ENCODE measurements at regions of chr1 and their contacts with region 1.

Region 1: DNA sequence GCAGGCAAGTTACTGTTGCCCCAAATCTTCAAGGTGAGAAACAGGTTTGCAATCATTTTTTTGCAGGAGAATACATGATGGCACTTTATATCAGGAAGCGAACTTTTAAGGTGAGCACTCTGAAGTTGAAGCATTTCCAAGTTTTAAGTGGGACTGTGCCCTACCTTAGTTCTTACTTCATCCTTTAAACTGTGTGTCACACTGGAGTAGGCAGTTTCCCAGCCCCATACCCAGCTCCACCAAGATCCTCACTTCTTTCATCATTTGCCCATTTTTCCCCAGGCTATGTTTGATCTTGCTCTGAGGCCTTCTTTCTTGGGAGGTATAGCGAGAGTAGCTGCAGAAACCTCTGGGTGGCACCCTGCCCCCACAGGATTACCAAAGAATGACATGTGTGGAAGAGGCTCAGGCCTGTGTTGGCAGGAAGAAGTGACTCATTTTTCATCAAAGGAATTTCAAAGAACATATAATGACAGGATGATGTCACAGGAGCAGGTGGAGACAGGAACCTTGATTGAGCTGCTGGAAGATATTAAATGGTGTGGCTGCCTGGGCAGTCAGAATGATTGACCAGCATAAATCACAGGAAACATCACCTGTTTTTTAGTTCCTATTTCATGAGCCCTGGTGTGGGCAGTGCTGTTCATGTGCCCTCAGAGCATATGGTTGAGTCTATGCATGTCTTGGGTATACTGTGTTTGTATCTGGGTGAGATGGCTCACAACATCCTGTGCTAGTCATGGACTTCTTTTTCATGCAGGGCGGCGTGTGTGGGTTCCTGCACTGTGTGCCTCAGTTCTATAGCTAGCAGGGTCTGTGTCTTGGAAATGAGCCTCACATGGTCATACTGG is 20.8 kb upstream of the MACF1 start:
- DNase-seq: peak; percentile 89
- H3K4me3 Mint-ChIP-seq: peak overlapping the region; percentile 51
- H3K27ac Mint-ChIP-seq: peak overlapping the region; percentile 91
- H3K4me1 Mint-ChIP-seq: peaks cover 80% of the 10 kb centered on the region
- H3K27me3 Mint-ChIP-seq: no peaks in the 10 kb centered on the region
- CTCF ChIP-seq: peak; percentile 48

Region 2: DNA sequence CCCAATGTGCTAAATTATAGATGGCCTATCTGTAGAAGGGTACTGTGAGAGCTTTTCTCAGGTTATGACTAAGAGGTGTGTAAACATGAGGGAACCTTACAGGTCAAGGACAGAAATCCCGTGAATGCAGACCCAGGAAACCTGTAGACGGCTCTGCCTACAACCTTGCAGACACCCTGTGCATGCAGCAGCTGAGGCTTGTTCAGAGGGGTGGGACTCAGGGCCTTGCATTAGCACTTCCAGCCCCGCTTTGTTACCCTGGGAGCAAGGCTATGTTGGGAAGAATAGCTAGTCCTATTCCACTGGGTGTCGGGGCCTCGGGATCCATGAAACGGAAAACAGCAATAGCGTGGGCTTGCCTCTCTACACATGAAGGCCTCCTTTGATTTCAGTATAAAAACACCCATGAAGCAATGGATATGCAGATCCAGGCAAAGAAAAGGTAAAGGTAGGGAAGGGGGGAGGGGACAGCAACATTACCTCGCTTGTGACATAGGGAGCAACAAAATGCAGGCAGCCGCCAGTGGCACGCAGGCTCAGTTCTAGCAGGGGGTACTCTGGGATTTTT is 167.0 kb before region 1 on chr1:
- CTCF ChIA-PET with region 1: no interaction called
- intact Hi-C with region 1: no loop called
- DNase-seq: peak; percentile 10
- H3K4me3 Mint-ChIP-seq: no peak overlapping the region
- H3K27ac Mint-ChIP-seq: no peak overlapping the region
- H3K4me1 Mint-ChIP-seq: peaks cover 11% of the 10 kb centered on the region
- H3K27me3 Mint-ChIP-seq: no peaks in the 10 kb centered on the region
- CTCF ChIP-seq: no peak

Region 3: GRCh38 chr1:39115271-39116110 is 68.2 kb before region 1 on chr1:
- CTCF ChIA-PET with region 1: interaction called, 3 read pairs
- intact Hi-C with region 1: loop called (anchors 5 kb)
- DNase-seq: no peak
- H3K4me3 Mint-ChIP-seq: no peak overlapping the region
- H3K27ac Mint-ChIP-seq: no peak overlapping the region
- H3K4me1 Mint-ChIP-seq: peaks cover 13% of the 10 kb centered on the region
- H3K27me3 Mint-ChIP-seq: no peaks in the 10 kb centered on the region
- CTCF ChIP-seq: no peak

Region 4: GRCh38 chr1:39258146-39258924 is 74.6 kb after region 1 on chr1:
- CTCF ChIA-PET with region 1: interaction called, 10 read pairs
- intact Hi-C with region 1: no loop called
- DNase-seq: peak; percentile 76
- H3K4me3 Mint-ChIP-seq: no peak overlapping the region
- H3K27ac Mint-ChIP-seq: no peak overlapping the region
- H3K4me1 Mint-ChIP-seq: no peaks in the 10 kb centered on the region
- H3K27me3 Mint-ChIP-seq: no peaks in the 10 kb centered on the region
- CTCF ChIP-seq: peak; percentile 81